WTC11 (cell line): ENCODE measurements at regions of chr11 and their contacts with region 1.

Region 1: GRCh38 chr11:66069715-66070603 is at the start of gene PACS1:
- DNase-seq: peak; percentile 73
- ATAC-seq: peak; percentile 57
- H3K4me3 Mint-ChIP-seq: peak within 1 kb of the TSS; percentile 88
- H3K27ac Mint-ChIP-seq: peak within 1 kb of the TSS; percentile 93
- H3K4me1 Mint-ChIP-seq: peaks cover 26% of the 10 kb centered on the region
- H3K27me3 Mint-ChIP-seq: no peaks in the 10 kb centered on the region
- CTCF ChIP-seq: no peak
- total RNA-seq, gene PACS1: 30.1 to 34.8 TPM (median 30.9 TPM) in 3 replicates

Region 2: GRCh38 chr11:66051766-66052663 is 17.9 kb before region 1 on chr11 and contains the start of gene SF3B2:
- CTCF ChIA-PET with region 1: interaction called, 35 read pairs
- POLR2A ChIA-PET with region 1: no interaction called
- DNase-seq: peak; percentile 97
- ATAC-seq: peak; percentile 95
- H3K4me3 Mint-ChIP-seq: peak within 1 kb of the TSS; percentile 100
- H3K27ac Mint-ChIP-seq: peak within 1 kb of the TSS; percentile 98
- H3K4me1 Mint-ChIP-seq: peaks cover 35% of the 10 kb centered on the region
- H3K27me3 Mint-ChIP-seq: no peaks in the 10 kb centered on the region
- CTCF ChIP-seq: no peak
- total RNA-seq, gene SF3B2: 235 to 295 TPM (median 251 TPM) in 3 replicates

Region 3: GRCh38 chr11:66136752-66137123 is 66.8 kb after region 1 on chr11:
- CTCF ChIA-PET with region 1: interaction called, 43 read pairs
- POLR2A ChIA-PET with region 1: no interaction called
- DNase-seq: no peak
- ATAC-seq: no peak
- H3K4me3 Mint-ChIP-seq: no peak overlapping the region
- H3K27ac Mint-ChIP-seq: no peak overlapping the region
- H3K4me1 Mint-ChIP-seq: peaks cover 12% of the 10 kb centered on the region
- H3K27me3 Mint-ChIP-seq: no peaks in the 10 kb centered on the region
- CTCF ChIP-seq: no peak